ENCODE measurements at regions of chr6 and their contacts with region 1.

Region 1: DNA sequence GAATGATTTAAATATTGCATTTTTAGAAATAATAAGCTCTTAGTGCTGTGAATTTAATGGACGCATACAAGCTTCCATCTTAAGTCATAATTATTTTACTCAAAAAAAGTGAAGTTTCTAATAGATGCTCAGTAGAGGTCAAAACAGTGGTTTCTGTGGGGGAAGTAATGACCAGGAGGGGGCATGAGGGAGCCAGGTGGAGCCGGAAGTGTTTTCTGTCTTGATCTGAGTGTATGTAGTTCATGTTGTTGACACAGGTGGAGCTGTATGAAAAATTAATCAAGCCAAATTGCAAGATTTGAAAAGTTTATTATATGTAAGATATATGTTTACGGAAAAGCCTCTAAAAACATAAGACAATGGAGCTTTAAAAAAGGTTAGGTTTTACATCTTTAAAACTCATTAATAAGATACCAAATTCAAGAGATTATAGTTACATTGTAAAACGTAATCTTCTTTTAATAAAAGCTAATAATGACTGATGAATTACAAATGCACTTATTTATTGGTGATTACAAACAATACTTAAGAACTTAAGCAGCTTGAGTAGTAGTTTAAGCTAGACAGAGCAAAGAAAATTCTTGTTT is 68.0 kb downstream of the PLAGL1 start:
- H3K4me3 Mint-ChIP-seq: no peak overlapping the region
- H3K27ac Mint-ChIP-seq: no peak overlapping the region
- H3K4me1 Mint-ChIP-seq: peaks cover 21% of the 10 kb centered on the region
- H3K27me3 Mint-ChIP-seq: no peaks in the 10 kb centered on the region

Region 2: GRCh38 chr6:143700684-143701348 is 239.3 kb before region 1 on chr6:
- intact Hi-C with region 1: no loop called
- H3K4me3 Mint-ChIP-seq: no peak overlapping the region
- H3K27ac Mint-ChIP-seq: no peak overlapping the region
- H3K4me1 Mint-ChIP-seq: peaks cover 17% of the 10 kb centered on the region
- H3K27me3 Mint-ChIP-seq: no peaks in the 10 kb centered on the region

Region 3: DNA sequence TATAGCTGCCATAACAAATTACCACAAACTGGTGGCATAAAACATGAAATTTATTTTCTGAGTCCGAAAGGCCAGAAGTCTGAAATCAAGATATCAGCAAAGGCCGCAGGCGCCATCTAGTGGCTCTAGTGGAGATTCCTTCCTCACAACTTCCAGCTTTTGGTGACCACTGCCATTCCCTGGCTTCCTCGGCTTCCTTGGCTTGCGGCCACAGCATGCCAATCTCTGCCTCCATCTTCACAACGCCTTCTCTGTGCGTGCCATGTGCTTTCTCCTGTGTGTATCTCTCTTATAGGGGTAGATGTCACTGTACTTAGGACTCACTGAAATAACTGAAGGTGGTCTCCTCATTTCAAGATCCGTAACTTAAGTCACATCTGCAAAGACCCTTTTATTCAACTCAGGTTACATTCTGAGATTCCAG is 73.4 kb after region 1 on chr6:
- intact Hi-C with region 1: loop called (anchors 1 kb)
- H3K4me3 Mint-ChIP-seq: no peak overlapping the region
- H3K27ac Mint-ChIP-seq: no peak overlapping the region
- H3K4me1 Mint-ChIP-seq: peaks cover 18% of the 10 kb centered on the region
- H3K27me3 Mint-ChIP-seq: peaks cover 1% of the 10 kb centered on the region